Dorsolateral prefrontal cortex (tissue), 120 donors: ENCODE measurements at regions of chr2 and their contacts with region 1.

Region 1: GRCh38 chr2:164479460-164479859 is 141.8 kb downstream of the GRB14 start:
- DNase-seq: peak in 7 of 10 donors; percentile 30 to 69 (median 47)
- H3K4me3 ChIP-seq: no peak overlapping the region
- H3K27ac ChIP-seq: no peak overlapping the region
- H3K27me3 ChIP-seq: no peaks in the 10 kb centered on the region
- CTCF ChIP-seq: peak; percentile 15 to 81 (median 58)

Region 2: DNA sequence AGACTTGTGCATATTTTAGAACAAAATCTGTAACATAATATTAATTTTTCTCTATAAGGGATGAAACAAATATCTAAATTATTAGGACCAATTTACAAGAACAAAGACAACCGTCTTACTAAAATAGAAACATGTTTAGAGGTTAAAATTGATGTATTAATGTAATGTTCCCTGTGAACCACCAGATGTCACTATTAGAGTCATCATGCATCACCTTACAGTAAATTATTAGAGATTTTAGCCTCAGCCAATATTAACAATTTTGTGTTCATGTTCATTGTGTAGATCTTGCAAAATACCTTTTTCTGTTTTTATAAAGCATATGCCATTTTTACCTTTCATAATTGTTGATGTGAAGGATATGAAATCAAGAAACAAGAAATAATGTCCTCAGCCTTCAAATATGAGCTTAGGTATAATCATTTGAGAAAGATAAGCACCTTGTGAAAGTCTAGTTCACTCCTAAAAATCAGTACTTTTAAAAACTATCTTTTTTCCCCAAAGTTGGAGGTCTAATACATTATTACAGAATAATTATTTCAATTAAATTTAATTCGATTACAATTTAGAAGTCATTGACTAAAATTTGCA is 1296.6 kb before region 1 on chr2:
- intact Hi-C with region 1: loop called (anchors 5 to 10 kb)
- DNase-seq: no peak
- H3K4me3 ChIP-seq: no peak overlapping the region
- H3K27ac ChIP-seq: no peak overlapping the region
- H3K27me3 ChIP-seq: peaks cover 0 to 8% (median 0%) of the 10 kb centered on the region in 45 donors
- CTCF ChIP-seq: peak; percentile 44 to 77 (median 66)

Region 3: GRCh38 chr2:164242409-164242808 is 237.1 kb before region 1 on chr2:
- intact Hi-C with region 1: no loop called
- DNase-seq: no peak
- H3K4me3 ChIP-seq: no peak overlapping the region
- H3K27ac ChIP-seq: no peak overlapping the region
- H3K27me3 ChIP-seq: no peaks in the 10 kb centered on the region
- CTCF ChIP-seq: no peak

Region 4: GRCh38 chr2:164447660-164448059 is 31.8 kb before region 1 on chr2:
- intact Hi-C with region 1: no loop called
- DNase-seq: no peak
- H3K4me3 ChIP-seq: no peak overlapping the region
- H3K27ac ChIP-seq: no peak overlapping the region
- H3K27me3 ChIP-seq: peaks cover 0 to under 1% (median 0%) of the 10 kb centered on the region in 45 donors
- CTCF ChIP-seq: no peak